Activated B cell treated with CpG ODN at 0.5 μM for 24 hours (primary cell): ENCODE measurements at regions of chr7 and their contacts with region 1.

Region 1: DNA sequence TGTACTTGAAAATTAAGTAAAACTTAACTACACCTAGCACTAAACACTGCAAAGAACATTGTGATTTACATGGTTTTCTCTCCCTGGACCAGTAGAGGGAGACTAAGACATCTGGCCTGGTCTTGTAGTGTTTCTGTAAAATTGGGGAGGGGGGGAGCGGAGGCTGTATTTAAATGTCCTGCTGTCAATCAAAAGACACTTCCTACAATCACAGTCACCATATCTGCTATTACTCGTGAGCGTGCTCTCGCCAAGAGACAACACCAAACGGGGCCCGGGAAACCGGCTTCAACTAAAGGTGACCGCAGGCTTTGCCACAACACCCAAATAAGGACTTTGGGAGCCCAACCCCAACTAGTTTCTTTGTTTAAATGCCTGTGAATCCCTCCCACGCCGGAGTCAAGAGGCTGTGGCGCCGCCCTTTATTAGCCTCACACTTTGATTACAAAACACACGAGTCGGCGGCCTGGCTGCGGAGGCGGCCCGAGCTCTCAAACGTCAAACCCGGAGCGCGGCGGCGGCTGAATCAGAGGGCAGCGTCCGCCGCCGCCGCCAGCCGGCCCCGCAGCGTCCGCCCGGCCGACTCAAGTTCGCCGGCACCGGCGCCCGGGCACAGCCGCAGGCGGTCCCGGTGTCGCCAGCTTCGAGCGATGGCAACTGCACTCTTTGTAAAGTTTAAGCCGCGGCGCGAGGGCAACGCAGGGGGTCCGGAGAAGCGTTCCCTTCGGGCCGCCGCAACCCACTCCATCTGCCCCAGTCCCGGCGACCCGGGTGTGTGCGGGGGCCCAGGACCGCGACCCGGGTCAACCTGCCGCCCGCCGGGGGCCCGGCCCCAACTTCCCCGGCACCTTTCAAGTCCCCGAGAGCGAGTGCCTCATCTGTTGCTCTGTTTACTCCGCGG is 1.3 kb downstream of the KDM7A start:
- DNase-seq: peak; percentile 73
- ATAC-seq: peak; percentile 64
- H3K4me3 Mint-ChIP-seq: peak overlapping the region; percentile 88
- H3K27ac Mint-ChIP-seq: peak overlapping the region; percentile 95
- H3K4me1 Mint-ChIP-seq: peaks cover 44% of the 10 kb centered on the region
- H3K27me3 Mint-ChIP-seq: no peaks in the 10 kb centered on the region
- CTCF ChIP-seq: peak; percentile 45

Region 2: DNA sequence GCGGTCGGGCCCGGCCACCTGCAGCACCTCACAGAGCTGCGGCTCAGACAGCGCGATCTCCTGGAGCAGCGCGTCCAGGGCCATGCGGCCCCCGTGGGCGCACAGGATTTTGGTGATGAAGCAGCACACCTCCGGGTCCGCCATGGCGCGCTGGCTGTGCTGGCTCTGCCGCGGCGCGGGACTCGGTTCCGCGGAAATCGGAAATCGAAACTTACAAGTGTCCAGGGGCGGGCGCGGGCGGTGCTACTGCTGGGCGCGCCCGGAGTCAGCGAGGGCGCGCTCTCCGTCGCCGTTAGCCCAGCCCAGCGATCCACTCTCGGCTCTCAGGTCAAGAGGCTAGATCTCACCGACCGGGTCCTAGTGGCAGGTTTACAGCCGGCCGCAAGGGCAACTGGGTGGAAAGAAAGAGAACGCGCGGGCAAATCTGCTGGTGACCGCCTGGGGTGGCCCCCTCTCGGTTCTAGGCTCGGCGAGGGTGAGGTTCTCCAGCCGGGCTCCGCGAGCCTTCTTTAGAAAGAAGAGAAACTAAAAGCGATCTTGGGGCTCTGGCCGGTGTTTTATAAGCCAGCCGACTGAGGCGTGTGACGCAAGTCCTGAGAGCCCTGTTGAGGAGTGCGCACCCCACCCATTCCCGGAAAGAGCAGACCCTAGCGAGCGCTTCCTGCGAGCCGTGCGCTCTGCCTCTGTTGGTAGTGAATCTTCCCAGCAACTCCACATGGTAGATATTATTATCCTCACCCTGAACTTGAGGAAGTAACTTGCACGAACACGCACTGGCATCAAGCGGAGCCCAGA is 1066.1 kb before region 1 on chr7 and contains the start of gene ZC3HAV1:
- CTCF ChIA-PET with region 1: no interaction called
- POLR2A ChIA-PET with region 1: no interaction called
- intact Hi-C with region 1: no loop called
- DNase-seq: peak; percentile 73
- ATAC-seq: peak; percentile 76
- H3K4me3 Mint-ChIP-seq: peak within 1 kb of the TSS; percentile 90
- H3K27ac Mint-ChIP-seq: peak within 1 kb of the TSS; percentile 97
- H3K4me1 Mint-ChIP-seq: peaks cover 44% of the 10 kb centered on the region
- H3K27me3 Mint-ChIP-seq: no peaks in the 10 kb centered on the region
- CTCF ChIP-seq: no peak
- total RNA-seq, gene ZC3HAV1: 76.3 and 80.7 TPM in 2 replicates

Region 3: DNA sequence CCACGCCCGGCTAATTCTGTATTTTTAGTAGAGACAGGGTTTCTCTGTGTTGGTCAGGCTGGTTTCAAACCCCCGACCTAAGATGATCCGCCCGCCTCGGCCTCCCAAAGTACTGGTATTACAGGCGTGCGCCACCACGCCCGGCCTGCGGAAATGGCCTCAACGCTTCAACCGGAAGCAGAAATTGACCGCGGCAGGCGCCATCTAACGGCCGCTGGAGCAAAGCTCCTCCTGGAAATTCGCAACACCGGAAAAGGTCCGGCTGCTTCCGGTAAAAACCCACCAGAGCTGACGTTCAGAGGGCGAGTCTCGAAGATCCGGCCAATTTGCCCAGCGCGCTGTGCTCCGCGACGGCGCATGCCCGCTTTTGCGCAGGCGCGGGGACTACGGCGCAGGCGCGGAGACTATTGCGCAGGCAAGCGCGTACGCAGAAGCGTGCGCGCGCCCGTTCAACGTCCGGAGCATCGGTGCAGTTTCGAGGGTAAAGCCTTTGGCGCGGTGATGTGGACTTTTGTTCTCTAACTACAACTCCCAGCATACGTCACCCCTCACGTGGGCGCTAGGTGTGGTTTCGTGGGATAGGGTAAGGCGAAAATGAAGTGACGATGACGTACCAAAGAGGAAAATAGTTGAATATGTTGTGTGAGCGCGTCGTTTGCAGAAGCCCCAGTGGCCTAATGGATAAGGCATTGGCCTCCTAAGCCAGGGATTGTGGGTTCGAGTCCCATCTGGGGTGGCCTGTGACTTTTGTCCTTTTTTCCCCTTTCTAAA is 835.2 kb before region 1 on chr7:
- CTCF ChIA-PET with region 1: no interaction called
- POLR2A ChIA-PET with region 1: no interaction called
- intact Hi-C with region 1: loop called (anchors 1 kb)
- DNase-seq: peak; percentile 95
- ATAC-seq: peak; percentile 77
- H3K4me3 Mint-ChIP-seq: peak overlapping the region; percentile 96
- H3K27ac Mint-ChIP-seq: peak overlapping the region; percentile 100
- H3K4me1 Mint-ChIP-seq: peaks cover 41% of the 10 kb centered on the region
- H3K27me3 Mint-ChIP-seq: peaks cover 9% of the 10 kb centered on the region
- CTCF ChIP-seq: no peak

Region 4: DNA sequence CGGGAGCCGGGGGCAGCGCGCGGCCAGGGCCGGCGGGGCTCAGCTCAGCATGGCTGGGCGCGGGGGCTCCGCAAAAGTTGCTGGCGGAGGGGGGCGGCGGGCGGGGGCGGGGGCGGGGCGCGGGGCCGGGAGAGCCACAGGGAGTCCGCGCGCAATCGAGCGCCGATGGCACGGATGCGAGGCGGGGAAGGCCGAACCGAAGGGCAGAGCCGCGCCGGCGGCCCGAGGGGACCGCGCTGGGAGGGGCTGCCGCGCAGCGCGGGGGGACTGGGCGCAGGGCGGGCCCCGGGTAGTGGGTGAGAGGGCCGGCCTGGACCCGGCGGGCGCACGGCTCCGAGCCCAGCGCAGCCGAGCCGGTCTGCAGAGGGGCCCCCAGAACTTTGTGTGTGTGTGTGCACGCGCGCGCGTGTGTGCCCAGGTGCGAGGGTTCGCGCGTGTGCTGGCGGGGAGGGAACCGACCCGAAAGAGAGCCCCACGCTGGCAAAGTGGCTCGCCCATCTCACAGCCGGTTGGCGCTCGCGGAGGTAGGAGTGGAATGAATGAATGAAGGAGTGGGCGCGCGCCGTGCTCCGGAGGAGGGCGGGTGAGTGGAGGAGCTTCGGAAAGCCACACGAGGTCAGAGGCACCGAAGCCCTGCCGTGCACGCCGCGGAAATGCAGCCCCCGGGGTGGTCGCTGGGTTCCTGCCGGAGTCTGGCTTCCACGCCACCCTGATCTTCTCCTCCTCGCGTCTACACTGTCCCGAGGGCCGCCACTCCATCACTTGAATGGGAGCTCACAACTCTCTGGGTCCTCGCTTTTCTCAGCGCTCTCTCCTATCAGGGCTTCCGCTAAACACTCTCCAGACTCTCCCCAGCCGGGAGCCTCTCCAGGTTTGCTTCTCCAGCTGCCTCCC is 397.3 kb before region 1 on chr7 and contains the start of gene HIPK2:
- CTCF ChIA-PET with region 1: no interaction called
- POLR2A ChIA-PET with region 1: interaction called, 3 read pairs
- intact Hi-C with region 1: loop called (anchors 2 kb)
- DNase-seq: peak; percentile 71
- ATAC-seq: peak; percentile 81
- H3K4me3 Mint-ChIP-seq: peak within 1 kb of the TSS; percentile 99
- H3K27ac Mint-ChIP-seq: peak within 1 kb of the TSS; percentile 94
- H3K4me1 Mint-ChIP-seq: peaks cover 39% of the 10 kb centered on the region
- H3K27me3 Mint-ChIP-seq: peaks cover 3% of the 10 kb centered on the region
- CTCF ChIP-seq: no peak
- total RNA-seq, gene HIPK2: 21.1 and 23.0 TPM in 2 replicates

Region 5: DNA sequence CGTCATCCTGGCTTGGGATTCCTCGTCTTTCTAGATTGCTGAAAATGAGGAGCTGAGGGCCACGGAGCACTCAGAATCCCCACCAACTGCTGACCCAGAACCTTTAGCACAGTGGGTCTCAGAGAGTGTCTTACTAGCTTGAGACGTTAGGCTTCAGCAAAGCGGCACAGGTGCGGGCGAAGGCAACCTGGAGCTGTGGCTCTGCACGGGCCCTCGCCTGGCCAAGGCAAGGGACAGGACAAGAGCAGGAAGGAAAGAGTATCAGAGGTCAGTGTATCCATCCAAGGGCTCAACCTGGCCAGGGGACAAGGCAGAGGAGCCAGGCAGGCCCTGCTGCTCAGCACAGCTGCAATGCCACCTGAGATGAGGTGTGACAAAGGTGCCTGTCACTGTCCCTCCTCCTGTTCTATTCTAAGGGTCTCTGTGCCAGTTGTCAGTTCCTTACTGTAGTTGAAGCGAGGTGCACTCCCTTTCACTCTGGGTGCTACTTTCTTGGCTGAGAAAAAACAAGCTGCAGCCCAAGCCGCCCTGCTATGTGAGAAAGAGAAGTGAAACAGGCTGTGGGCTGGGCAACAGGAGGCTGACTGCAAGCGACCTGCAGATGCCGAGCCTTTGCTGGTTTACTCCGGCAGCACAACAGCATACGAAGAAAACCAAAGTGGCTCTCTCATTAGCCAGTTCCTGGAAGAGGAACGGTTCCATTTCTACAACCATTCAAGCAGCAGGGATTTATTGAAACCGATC is 34.6 kb after region 1 on chr7:
- CTCF ChIA-PET with region 1: interaction called, 7 read pairs
- POLR2A ChIA-PET with region 1: interaction called, 86 read pairs
- intact Hi-C with region 1: loop called (anchors 1 kb)
- DNase-seq: peak; percentile 61
- ATAC-seq: peak; percentile 89
- H3K4me3 Mint-ChIP-seq: peak overlapping the region; percentile 73
- H3K27ac Mint-ChIP-seq: peak overlapping the region; percentile 97
- H3K4me1 Mint-ChIP-seq: peaks cover 86% of the 10 kb centered on the region
- H3K27me3 Mint-ChIP-seq: no peaks in the 10 kb centered on the region
- CTCF ChIP-seq: no peak

Region 6: GRCh38 chr7:140304191-140304799 is 128.8 kb after region 1 on chr7:
- CTCF ChIA-PET with region 1: interaction called, 16 read pairs
- POLR2A ChIA-PET with region 1: interaction called, 7 read pairs
- intact Hi-C with region 1: loop called (anchors 1 kb)
- DNase-seq: no peak
- ATAC-seq: peak; percentile 96
- H3K4me3 Mint-ChIP-seq: peak overlapping the region; percentile 39
- H3K27ac Mint-ChIP-seq: peak overlapping the region; percentile 90
- H3K4me1 Mint-ChIP-seq: peaks cover 5% of the 10 kb centered on the region
- H3K27me3 Mint-ChIP-seq: no peaks in the 10 kb centered on the region
- CTCF ChIP-seq: no peak

Region 7: DNA sequence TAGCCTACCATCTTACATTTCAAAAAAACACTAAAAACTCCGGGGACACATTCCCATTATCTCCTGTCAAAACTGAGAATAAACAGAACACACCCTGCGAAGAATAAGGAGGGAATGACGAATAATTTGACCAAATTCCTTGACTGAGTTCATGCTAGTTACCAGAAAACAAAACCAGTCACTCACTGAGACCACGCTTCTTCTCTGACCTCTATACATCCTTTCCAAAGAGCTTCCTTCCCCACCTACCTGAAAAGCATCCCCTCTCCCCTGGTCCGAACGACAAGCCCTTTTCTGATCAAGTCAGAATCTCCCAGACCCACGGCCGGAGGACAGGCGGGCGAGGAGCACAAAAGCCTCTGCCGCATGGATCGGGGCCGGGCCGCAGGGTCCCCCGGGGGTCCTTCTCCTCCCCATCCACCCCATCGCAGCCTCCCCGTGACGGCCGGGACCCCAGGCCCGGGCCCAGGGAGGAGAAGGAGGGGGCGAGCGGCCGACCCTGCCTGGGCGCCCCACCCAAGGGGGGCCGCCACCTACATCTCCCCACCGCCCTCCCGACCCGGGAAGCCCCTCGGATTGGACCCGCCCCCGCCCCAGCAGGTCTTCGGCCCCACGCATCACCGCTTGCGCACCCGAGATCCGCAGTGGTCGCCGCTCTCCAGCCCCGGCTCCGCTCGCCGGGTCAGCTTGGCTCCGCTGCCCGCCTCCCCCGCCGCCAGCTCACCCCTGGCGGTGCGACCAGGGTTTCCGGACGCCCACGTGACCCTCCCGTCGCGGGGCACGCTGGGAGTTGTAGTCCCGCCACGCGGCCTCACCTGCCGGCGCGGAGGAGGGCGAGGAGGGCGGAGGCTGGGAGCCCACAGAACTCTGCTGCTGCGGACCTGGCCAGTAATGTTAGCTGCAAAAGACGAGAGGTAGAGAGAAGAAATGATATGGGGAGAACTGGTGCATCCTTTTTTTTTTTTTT is 222.6 kb after region 1 on chr7 and contains the start of gene SLC37A3:
- CTCF ChIA-PET with region 1: no interaction called
- POLR2A ChIA-PET with region 1: interaction called, 7 read pairs
- intact Hi-C with region 1: loop called (anchors 1 kb)
- DNase-seq: peak; percentile 85
- ATAC-seq: peak; percentile 96
- H3K4me3 Mint-ChIP-seq: peak within 1 kb of the TSS; percentile 88
- H3K27ac Mint-ChIP-seq: peak within 1 kb of the TSS; percentile 65
- H3K4me1 Mint-ChIP-seq: peaks cover 8% of the 10 kb centered on the region
- H3K27me3 Mint-ChIP-seq: peaks cover 1% of the 10 kb centered on the region
- CTCF ChIP-seq: no peak
- total RNA-seq, gene SLC37A3: 10.6 and 12.4 TPM in 2 replicates

Region 8: DNA sequence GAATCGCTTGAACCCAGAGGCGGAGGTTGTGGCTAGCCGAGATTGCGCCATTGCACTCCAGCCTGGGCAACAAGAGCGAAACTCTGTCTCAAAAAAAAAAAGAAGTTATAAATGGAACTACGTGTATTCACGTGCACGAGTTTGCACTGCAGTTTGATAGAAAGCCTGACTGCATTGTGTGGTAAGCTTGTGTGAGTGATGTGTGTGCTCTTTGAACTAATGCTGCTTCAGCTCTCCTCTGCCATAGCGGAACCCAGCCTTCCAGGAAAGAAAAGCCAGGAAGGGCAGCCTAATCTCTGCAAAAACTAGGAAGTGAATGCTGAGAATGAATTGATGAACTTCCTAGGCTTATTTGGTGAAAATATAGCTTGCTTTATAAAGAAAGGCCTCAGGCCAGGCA is 319.4 kb after region 1 on chr7:
- CTCF ChIA-PET with region 1: no interaction called
- POLR2A ChIA-PET with region 1: no interaction called
- intact Hi-C with region 1: loop called (anchors 1 kb)
- DNase-seq: no peak
- ATAC-seq: no peak
- H3K4me3 Mint-ChIP-seq: no peak overlapping the region
- H3K27ac Mint-ChIP-seq: no peak overlapping the region
- H3K4me1 Mint-ChIP-seq: no peaks in the 10 kb centered on the region
- H3K27me3 Mint-ChIP-seq: no peaks in the 10 kb centered on the region
- CTCF ChIP-seq: no peak